B cell (primary cell): ENCODE measurements at regions of chr2 and their contacts with region 1.

Region 1: GRCh38 chr2:178891265-178891958 is 84.2 kb upstream of the TTN start:
- DNase-seq: peak; percentile 72
- ATAC-seq: peak; percentile 61
- H3K4me3 ChIP-seq: no peak overlapping the region
- H3K4me3 Mint-ChIP-seq: no peak overlapping the region
- H3K27ac ChIP-seq: no peak overlapping the region
- H3K27ac Mint-ChIP-seq: no peak overlapping the region
- H3K4me1 ChIP-seq: no peaks in the 10 kb centered on the region
- H3K4me1 Mint-ChIP-seq: no peaks in the 10 kb centered on the region
- H3K27me3 ChIP-seq: no peaks in the 10 kb centered on the region
- H3K27me3 Mint-ChIP-seq: no peaks in the 10 kb centered on the region
- CTCF ChIP-seq: peak; percentile 98

Region 2: GRCh38 chr2:178914259-178914849 is 22.9 kb after region 1 on chr2:
- CTCF ChIA-PET with region 1: interaction called, 11 read pairs
- POLR2A ChIA-PET with region 1: no interaction called
- intact Hi-C with region 1: loop called (anchors 1 kb)
- DNase-seq: peak; percentile 70
- ATAC-seq: peak; percentile 79
- H3K4me3 ChIP-seq: no peak overlapping the region
- H3K4me3 Mint-ChIP-seq: no peak overlapping the region
- H3K27ac ChIP-seq: no peak overlapping the region
- H3K27ac Mint-ChIP-seq: no peak overlapping the region
- H3K4me1 ChIP-seq: no peaks in the 10 kb centered on the region
- H3K4me1 Mint-ChIP-seq: peaks cover 9% of the 10 kb centered on the region
- H3K27me3 ChIP-seq: no peaks in the 10 kb centered on the region
- H3K27me3 Mint-ChIP-seq: no peaks in the 10 kb centered on the region
- CTCF ChIP-seq: peak; percentile 90

Region 3: GRCh38 chr2:179123272-179123662 is 231.9 kb after region 1 on chr2:
- CTCF ChIA-PET with region 1: interaction called, 141 read pairs
- POLR2A ChIA-PET with region 1: no interaction called
- intact Hi-C with region 1: no loop called
- DNase-seq: no peak
- ATAC-seq: peak; percentile 39
- H3K4me3 ChIP-seq: no peak overlapping the region
- H3K4me3 Mint-ChIP-seq: peak overlapping the region; percentile 43
- H3K27ac ChIP-seq: peak overlapping the region in 1 of 2 donors; percentile 17
- H3K27ac Mint-ChIP-seq: peak overlapping the region; percentile 83
- H3K4me1 ChIP-seq: peaks cover 6 to 7% of the 10 kb centered on the region in 2 donors
- H3K4me1 Mint-ChIP-seq: peaks cover 19% of the 10 kb centered on the region
- H3K27me3 ChIP-seq: no peaks in the 10 kb centered on the region
- H3K27me3 Mint-ChIP-seq: no peaks in the 10 kb centered on the region
- CTCF ChIP-seq: no peak

Region 4: DNA sequence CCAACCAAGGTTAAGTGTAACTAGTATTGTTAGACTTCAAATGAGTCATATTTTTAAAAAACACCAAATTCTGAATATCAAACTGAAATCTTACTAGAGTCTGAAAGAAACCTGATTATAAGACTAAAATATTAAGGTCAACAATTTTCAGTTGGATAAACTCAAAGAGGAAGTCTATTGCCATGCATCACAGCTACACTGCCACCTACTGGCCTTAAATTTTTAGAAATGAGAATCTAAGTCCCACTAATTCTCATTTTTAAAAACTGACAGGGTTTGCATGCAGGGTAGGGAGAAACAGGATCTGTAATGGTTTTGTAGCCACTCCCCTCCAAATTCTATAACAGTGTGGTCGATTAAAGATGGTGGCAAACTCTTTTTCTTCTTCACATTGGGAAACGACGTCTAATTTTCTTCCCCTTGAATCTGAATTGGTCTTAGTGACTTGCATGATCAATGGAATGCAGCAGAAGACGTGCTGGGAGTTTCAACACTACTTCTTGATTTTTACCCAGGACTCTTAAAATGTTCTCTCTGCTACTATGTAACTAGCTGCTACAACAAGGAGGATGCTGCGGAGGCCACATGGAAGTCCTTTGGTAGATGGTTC is 549.3 kb after region 1 on chr2:
- CTCF ChIA-PET with region 1: no interaction called
- POLR2A ChIA-PET with region 1: no interaction called
- intact Hi-C with region 1: loop called (anchors 2 kb)
- DNase-seq: peak; percentile 70
- ATAC-seq: no peak
- H3K4me3 ChIP-seq: no peak overlapping the region
- H3K4me3 Mint-ChIP-seq: no peak overlapping the region
- H3K27ac ChIP-seq: no peak overlapping the region
- H3K27ac Mint-ChIP-seq: no peak overlapping the region
- H3K4me1 ChIP-seq: no peaks in the 10 kb centered on the region
- H3K4me1 Mint-ChIP-seq: no peaks in the 10 kb centered on the region
- H3K27me3 ChIP-seq: peaks cover 0 to 8% (median 1%) of the 10 kb centered on the region in 4 experiments
- H3K27me3 Mint-ChIP-seq: peaks cover 30% of the 10 kb centered on the region
- CTCF ChIP-seq: peak; percentile 89